Activated naive CD4-positive, alpha-beta T cell treated with anti-CD3 and anti-CD28 coated beads for 36 hours (primary cell): ENCODE measurements at regions of chr16 and their contacts with region 1.

Region 1: GRCh38 chr16:401468-402348 is at the start of gene DECR2:
- DNase-seq: peak; percentile 99
- H3K4me3 Mint-ChIP-seq: peak within 1 kb of the TSS; percentile 83
- H3K27ac Mint-ChIP-seq: peak within 1 kb of the TSS; percentile 83
- H3K4me1 Mint-ChIP-seq: peaks cover 17% of the 10 kb centered on the region
- H3K27me3 Mint-ChIP-seq: no peaks in the 10 kb centered on the region
- total RNA-seq, gene DECR2: 8.9 to 9.6 TPM

Region 2: DNA sequence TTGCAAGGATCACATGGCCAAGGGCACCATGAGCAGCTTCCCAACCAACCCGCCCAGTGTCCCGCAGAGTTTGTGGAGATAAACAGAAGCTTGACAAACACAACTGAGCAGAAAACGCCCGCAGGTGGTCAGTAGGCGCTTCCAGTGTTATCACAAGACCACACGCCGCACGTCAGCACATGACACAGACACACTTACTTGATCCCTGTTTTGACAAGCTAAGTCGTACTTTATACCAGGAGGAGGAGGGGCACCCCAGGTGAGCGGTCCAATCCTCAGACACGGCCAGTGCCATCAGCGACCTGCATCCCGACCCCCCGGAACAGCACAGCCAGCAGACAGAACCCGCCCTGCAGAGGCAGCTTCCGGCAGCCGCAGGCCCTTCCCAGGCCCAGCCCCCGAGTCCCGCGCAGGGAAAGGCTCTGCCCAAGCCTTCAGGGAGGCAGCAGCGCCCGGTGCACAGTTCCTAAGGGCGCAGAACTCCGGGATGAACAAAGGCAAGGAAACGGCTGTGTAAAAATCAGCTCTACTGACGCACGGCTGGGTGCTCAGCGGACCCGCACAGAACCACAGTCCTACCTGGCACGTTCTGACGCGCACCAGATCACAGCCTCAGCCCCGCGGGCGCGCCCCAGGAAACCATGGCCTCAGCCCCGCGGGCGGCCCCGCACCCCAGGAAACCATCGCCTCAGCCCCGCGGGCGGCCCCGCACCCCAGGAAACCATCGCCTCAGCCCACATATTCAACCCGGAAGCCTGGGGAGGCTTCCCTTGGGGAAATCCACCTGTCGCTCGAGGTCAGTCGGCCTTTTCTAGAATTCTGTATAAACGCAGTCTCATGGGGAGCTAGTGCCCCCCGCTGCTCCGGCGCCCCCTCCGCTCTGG is 77.0 kb before region 1 on chr16:
- CTCF ChIA-PET with region 1: no interaction called
- intact Hi-C with region 1: no loop called
- DNase-seq: peak; percentile 83
- H3K4me3 Mint-ChIP-seq: peak overlapping the region; percentile 71
- H3K27ac Mint-ChIP-seq: peak overlapping the region; percentile 55
- H3K4me1 Mint-ChIP-seq: peaks cover 64% of the 10 kb centered on the region
- H3K27me3 Mint-ChIP-seq: no peaks in the 10 kb centered on the region

Region 3: GRCh38 chr16:370443-370842 is 31.3 kb before region 1 on chr16 and contains the start of gene MRPL28:
- CTCF ChIA-PET with region 1: no interaction called
- intact Hi-C with region 1: loop called (anchors 2 kb)
- DNase-seq: peak; percentile 97
- H3K4me3 Mint-ChIP-seq: peak within 1 kb of the TSS; percentile 81
- H3K27ac Mint-ChIP-seq: peak within 1 kb of the TSS; percentile 85
- H3K4me1 Mint-ChIP-seq: peaks cover 14% of the 10 kb centered on the region
- H3K27me3 Mint-ChIP-seq: no peaks in the 10 kb centered on the region
- total RNA-seq, gene MRPL28: 68.3 to 74.0 TPM

Region 4: DNA sequence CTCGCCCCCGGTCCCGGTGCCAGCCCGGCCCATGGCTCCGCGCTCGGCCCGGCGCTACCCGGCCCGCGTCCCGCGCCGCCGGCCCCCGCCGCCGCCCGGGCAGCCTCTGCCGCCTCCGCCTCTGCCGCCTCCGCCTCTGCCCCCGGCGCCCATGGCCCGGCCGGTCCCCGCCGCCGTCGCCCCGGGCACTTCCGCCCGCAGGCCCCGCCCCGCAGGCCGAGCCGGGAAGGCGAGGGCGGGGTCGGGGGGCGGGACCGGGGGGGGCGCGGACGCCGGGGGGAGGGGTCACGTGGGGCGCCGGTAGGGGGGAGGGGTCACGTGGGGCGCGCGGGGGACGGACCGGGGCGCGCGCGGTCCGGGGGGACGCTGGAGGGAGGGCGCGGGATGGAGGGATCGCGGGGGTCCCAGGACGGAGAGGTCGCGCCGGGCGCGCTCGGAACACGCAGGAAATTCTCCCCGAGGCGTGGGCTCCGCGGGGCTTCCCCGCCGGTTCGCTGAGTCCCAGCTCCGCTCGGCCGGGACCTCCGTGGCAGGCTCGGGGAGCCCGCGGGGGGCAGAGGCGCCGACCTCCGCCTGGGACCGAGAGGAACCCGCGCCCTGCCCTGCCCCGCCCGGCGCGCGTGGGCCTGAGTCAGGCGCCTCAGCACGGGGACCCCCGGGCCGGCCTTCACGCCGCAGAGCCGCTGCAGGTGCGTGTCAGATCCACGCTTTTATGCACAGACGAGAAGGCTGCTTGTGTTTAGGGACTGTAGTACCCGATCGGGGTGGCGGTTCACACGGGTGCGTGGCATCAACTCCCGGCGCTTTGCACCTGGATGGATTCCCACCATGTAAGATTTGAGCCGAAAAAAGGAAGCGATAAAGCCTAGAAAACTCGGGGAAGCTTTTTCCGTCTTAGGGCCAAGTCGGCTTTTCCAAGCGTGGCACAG is 19.7 kb before region 1 on chr16 and contains the start of gene PGAP6:
- CTCF ChIA-PET with region 1: no interaction called
- intact Hi-C with region 1: loop called (anchors 2 kb)
- DNase-seq: peak; percentile 67
- H3K4me3 Mint-ChIP-seq: peak within 1 kb of the TSS; percentile 80
- H3K27ac Mint-ChIP-seq: peak within 1 kb of the TSS; percentile 66
- H3K4me1 Mint-ChIP-seq: peaks cover 25% of the 10 kb centered on the region
- H3K27me3 Mint-ChIP-seq: no peaks in the 10 kb centered on the region
- total RNA-seq, gene PGAP6: 19.9 to 20.9 TPM

Region 5: GRCh38 chr16:425082-425718 is 23.5 kb after region 1 on chr16 and contains the start of gene RAB11FIP3:
- CTCF ChIA-PET with region 1: no interaction called
- intact Hi-C with region 1: loop called (anchors 1 kb)
- DNase-seq: peak; percentile 78
- H3K4me3 Mint-ChIP-seq: peak within 1 kb of the TSS; percentile 81
- H3K27ac Mint-ChIP-seq: peak within 1 kb of the TSS; percentile 24
- H3K4me1 Mint-ChIP-seq: peaks cover 26% of the 10 kb centered on the region
- H3K27me3 Mint-ChIP-seq: peaks cover 2% of the 10 kb centered on the region
- total RNA-seq, gene RAB11FIP3: 15.8 to 18.2 TPM